ENCODE measurements at regions of chr19 and their contacts with region 1.

Region 1: GRCh38 chr19:17069218-17069617 is 6.0 kb downstream of the HAUS8 start:
- DNase-seq: no peak
- ATAC-seq: no peak
- H3K4me3 ChIP-seq: no peak overlapping the region
- H3K27ac ChIP-seq: no peak overlapping the region
- H3K4me1 ChIP-seq: peaks cover 0 to 30% (median 18%) of the 10 kb centered on the region in 9 donors
- H3K27me3 ChIP-seq: no peaks in the 10 kb centered on the region
- CTCF ChIP-seq: no peak

Region 2: GRCh38 chr19:16976441-16976840 is 92.8 kb before region 1 on chr19:
- intact Hi-C with region 1: no loop called
- DNase-seq: no peak
- ATAC-seq: no peak
- H3K4me3 ChIP-seq: no peak overlapping the region
- H3K27ac ChIP-seq: no peak overlapping the region
- H3K4me1 ChIP-seq: no peaks in the 10 kb centered on the region
- H3K27me3 ChIP-seq: no peaks in the 10 kb centered on the region
- CTCF ChIP-seq: no peak

Region 3: DNA sequence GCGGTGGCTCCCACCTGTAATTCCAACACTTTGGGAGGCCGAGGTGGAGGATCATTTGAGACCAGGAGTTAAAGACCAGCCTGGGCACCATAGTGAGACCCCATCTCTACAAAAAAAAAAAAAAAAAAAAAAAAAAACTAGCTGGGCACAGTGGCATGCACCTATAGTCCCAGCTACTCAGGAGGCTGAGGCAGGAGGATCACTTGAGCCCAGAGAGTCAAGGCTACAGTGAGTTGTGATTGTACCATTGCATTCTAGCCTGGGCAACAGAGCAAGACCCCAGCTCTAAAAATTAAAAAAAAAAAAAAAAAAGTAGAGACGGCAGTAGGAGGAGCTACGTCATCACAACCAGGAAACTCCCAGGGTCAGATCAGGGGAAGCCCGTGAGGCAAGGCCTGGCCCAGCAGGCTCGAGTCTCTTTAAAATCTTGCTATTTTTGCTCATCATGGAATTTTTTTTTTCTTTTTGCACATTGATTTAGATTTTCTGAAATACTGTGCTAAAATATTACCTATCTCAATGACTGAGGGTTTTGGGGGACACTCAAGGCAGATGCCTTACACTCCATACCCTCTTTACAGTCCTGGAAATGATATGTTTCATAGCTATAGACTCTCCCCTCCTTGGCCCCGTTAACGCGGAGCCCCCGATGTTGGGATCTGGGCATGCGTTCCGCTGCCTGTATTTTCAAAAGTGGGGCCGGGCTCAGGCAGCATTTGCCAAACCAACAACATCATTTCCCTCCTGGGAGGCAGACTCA is 101.5 kb after region 1 on chr19:
- intact Hi-C with region 1: loop called in 2 of 10 experiments (anchors 5 to 10 kb)
- DNase-seq: no peak
- ATAC-seq: no peak
- H3K4me3 ChIP-seq: no peak overlapping the region
- H3K27ac ChIP-seq: no peak overlapping the region
- H3K4me1 ChIP-seq: no peaks in the 10 kb centered on the region
- H3K27me3 ChIP-seq: no peaks in the 10 kb centered on the region
- CTCF ChIP-seq: no peak

Region 4: DNA sequence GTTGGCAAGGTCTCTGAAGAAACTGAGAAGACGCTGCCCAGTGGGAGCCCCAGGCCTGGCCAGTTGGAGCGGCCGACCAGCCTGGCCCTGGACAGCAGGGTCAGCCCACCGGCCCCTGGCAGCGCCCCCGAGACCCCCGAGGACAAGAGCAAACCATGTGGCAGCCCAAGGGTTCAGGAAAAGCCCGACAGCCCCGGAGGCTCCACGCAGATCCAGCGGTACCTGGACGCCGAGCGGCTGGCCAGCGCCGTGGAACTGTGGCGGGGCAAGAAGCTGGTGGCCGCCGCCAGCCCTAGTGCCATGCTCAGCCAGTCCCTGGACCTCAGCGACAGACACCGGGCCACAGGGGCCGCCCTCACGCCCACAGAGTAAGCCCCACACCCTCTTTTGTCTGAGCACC is 125.9 kb after region 1 on chr19:
- intact Hi-C with region 1: no loop called
- DNase-seq: no peak
- ATAC-seq: no peak
- H3K4me3 ChIP-seq: no peak overlapping the region
- H3K27ac ChIP-seq: no peak overlapping the region
- H3K4me1 ChIP-seq: no peaks in the 10 kb centered on the region
- H3K27me3 ChIP-seq: no peaks in the 10 kb centered on the region
- CTCF ChIP-seq: no peak

Region 5: GRCh38 chr19:17235618-17236377 is 166.6 kb after region 1 on chr19:
- intact Hi-C with region 1: loop called in 1 of 10 experiments (anchors 5 kb)
- DNase-seq: peak in 1 of 2 donors; percentile 77
- ATAC-seq: peak; percentile 84 to 94 (median 88)
- H3K4me3 ChIP-seq: peak overlapping the region; percentile 5 to 67 (median 58)
- H3K27ac ChIP-seq: peak overlapping the region in 9 of 10 donors; percentile 49 to 85 (median 79)
- H3K4me1 ChIP-seq: peaks cover 12 to 29% (median 22%) of the 10 kb centered on the region in 9 donors
- H3K27me3 ChIP-seq: no peaks in the 10 kb centered on the region
- CTCF ChIP-seq: peak; percentile 15 to 81 (median 50)